Cardiac septum (tissue), 1 donor: ENCODE measurements at regions of chr6 and their contacts with region 1.

Region 1: GRCh38 chr6:38702558-38703397 is at the start of gene GLO1:
- DNase-seq: peak; percentile 98
- total RNA-seq, gene GLO1: 70.3 TPM

Region 2: GRCh38 chr6:38639498-38640215 is 63.1 kb before region 1 on chr6 and contains the start of gene BTBD9:
- intact Hi-C with region 1: loop called (anchors 2 kb)
- DNase-seq: peak; percentile 90
- total RNA-seq, gene BTBD9: 24.2 TPM

Region 3: DNA sequence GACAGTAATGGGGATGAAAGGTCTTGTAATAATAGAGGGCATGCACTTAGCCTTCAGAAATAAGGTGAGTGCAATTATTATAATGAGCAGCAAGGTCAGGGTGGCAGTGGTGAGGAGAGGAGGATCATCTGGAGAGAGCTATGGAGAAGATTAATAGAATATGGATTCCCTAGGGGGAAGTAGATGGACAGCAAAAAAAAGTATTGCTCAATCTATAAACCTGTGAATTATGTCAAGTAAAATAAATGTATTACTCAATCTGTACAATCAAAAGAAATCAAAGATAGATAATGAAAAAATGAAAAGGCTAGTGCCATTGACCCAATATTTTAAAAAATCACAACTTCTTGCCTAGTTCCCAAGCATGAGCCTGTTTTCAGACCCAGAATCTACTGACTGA is 42.5 kb before region 1 on chr6:
- intact Hi-C with region 1: no loop called
- DNase-seq: no peak

Region 4: DNA sequence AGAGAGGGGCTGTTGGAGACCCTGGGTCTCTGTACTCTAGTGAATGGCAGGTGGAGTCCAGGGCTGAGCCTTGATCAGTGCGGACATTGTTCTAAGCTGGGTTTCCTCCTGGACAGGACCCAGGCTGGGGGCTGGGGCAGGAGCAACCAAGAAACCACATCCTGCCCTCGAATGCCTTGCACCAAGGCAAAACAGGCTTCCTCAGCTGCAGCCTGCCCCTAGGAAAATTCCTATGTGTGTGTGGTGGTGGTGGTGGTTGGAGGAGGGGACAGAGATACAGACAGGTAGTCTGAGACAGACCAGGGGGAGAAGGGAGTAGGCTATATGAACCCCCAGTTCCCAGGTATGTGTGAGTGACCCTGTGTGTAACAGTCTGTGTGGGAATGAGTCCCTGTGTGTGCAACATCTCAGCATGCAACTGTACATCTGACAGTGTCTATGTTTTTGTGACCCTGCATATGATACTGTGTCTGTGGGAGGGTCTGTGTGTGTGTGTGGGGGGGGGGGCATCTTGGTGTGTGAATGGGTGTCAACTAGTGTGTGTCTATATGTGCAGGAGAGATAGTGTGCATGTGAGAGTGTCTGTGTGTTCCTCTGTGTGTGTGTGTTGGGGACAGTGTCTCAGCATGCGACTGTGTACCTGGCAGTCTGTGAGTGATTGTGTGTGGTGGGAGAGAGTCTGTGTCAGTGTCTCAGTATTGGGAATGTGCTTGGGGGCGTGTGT is 348.8 kb after region 1 on chr6:
- intact Hi-C with region 1: no loop called
- DNase-seq: peak; percentile 60